Endothelial cell of umbilical vein (primary cell): ENCODE measurements at regions of chr12 and their contacts with region 1.

Region 1: GRCh38 chr12:74801625-74802024 is 264.0 kb downstream of the ATXN7L3B start:
- DNase-seq: no peak
- H3K4me3 ChIP-seq: no peak overlapping the region
- H3K27ac ChIP-seq: no peak overlapping the region
- H3K4me1 ChIP-seq: no peaks in the 10 kb centered on the region
- H3K27me3 ChIP-seq: no peaks in the 10 kb centered on the region
- CTCF ChIP-seq: no peak
- POLR2A ChIP-seq: no peak

Region 2: DNA sequence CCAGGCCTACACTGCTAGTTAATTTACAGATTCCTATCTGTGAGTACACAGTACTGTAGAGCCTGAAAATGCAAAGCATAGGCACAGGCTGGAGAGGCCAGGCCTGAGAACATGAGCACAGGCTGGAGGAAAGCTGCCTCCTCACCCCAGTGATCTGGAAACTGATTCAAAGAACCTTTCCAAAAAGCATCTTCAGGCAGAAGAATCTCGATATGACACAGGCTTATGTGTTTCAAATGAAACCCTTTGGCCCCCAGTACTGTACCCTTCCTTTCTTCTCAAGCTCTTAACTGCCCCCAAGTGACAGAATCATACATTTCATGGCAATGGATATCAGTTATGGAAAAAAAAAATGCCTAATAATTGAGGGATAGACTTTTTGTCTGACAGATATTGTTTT is 286.0 kb after region 1 on chr12:
- CTCF ChIA-PET with region 1: interaction called, 3 read pairs
- POLR2A ChIA-PET with region 1: no interaction called
- dilution Hi-C with region 1: no loop called
- intact Hi-C with region 1: loop called (anchors 2 kb)
- DNase-seq: no peak
- H3K4me3 ChIP-seq: no peak overlapping the region
- H3K27ac ChIP-seq: no peak overlapping the region
- H3K4me1 ChIP-seq: no peaks in the 10 kb centered on the region
- H3K27me3 ChIP-seq: no peaks in the 10 kb centered on the region
- CTCF ChIP-seq: no peak
- POLR2A ChIP-seq: no peak

Region 3: GRCh38 chr12:75289753-75290152 is 488.1 kb after region 1 on chr12:
- CTCF ChIA-PET with region 1: interaction called, 5 read pairs
- POLR2A ChIA-PET with region 1: no interaction called
- dilution Hi-C with region 1: no loop called
- intact Hi-C with region 1: loop called (anchors 1 kb)
- DNase-seq: peak; percentile 22
- H3K4me3 ChIP-seq: no peak overlapping the region
- H3K27ac ChIP-seq: no peak overlapping the region
- H3K4me1 ChIP-seq: no peaks in the 10 kb centered on the region
- H3K27me3 ChIP-seq: no peaks in the 10 kb centered on the region
- CTCF ChIP-seq: no peak
- POLR2A ChIP-seq: no peak

Region 4: DNA sequence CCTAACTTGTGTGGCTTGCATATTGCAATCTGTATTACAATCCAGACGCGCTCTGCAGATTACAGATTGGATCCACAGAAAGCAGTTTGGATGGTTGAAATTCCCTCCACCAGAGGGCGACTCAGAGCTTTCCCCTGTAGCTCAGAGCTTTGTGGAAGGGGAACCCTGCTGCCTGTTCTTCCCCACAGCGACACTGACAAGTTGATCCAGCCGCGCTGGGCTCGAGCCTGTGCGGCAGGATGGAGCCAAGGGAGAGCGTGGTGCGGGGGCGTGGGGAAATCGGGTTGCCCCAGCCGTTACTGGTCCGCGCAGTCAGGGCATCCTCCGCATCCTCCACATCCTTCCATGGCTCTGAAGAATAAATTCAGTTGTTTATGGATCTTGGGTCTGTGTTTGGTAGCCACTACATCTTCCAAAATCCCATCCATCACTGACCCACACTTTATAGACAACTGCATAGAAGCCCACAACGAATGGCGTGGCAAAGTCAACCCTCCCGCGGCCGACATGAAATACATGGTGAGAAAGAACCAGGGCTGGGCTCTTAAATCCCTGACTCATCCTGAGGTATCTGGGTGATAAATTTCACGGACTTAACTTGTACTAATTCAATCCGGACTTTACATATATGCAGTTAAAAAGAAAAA is 532.9 kb after region 1 on chr12 and contains the start of gene GLIPR1L1:
- CTCF ChIA-PET with region 1: no interaction called
- POLR2A ChIA-PET with region 1: no interaction called
- dilution Hi-C with region 1: no loop called
- intact Hi-C with region 1: loop called (anchors 2 kb)
- DNase-seq: peak; percentile 88
- H3K4me3 ChIP-seq: peak within 1 kb of the TSS; percentile 20 to 58 (median 56)
- H3K27ac ChIP-seq: no peak within 1 kb of the TSS
- H3K4me1 ChIP-seq: peaks cover 10% of the 10 kb centered on the region
- H3K27me3 ChIP-seq: peaks cover 2 to 13% of the 10 kb centered on the region in 2 experiments
- CTCF ChIP-seq: peak; percentile 85 to 91
- POLR2A ChIP-seq: no peak
- total RNA-seq, gene GLIPR1L1: not detected in 2 replicates